A549 (cell line): ENCODE measurements at regions of chr2 and their contacts with region 1.

Region 1: DNA sequence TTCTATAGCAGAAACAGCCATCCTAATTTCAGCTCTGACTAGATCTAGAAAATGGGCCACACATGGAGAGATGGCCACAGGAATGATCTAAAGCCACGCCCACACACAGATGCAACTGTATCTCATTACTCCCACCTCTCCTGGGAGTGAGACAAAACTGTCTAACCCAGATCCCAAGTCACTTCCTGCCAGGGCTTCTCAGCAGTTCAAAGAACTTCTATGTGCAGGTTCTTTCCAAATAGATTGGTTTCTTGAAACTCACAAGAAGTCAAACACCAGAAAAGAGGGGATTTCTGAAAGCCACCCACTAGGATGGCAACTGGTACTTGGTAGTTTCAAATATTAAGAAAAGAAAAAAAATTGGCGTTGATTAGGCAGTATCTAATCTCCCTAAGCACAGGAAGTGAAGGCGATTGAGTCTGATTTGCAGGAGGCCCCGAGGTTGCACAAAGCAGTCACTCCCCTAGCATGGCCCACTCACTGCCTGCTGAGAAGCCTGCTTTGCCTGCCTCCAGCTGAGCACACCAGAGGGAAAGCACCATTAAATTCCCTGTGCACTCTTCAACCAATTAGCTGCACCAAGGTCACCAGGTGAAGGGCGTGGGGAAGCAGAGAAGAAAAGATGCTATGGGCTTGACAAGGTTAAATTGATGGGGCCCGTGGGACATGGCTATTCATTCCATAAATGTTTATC is 51.1 kb downstream of the PAPOLG start:
- DNase-seq: no peak
- ATAC-seq: no peak
- H3K4me3 ChIP-seq: no peak overlapping the region
- H3K27ac ChIP-seq: no peak overlapping the region
- H3K4me1 ChIP-seq: no peaks in the 10 kb centered on the region
- CTCF ChIP-seq: no peak
- EP300 ChIP-seq: no peak
- POLR2A ChIP-seq: no peak
- RAD21 ChIP-seq: no peak

Region 2: GRCh38 chr2:60818272-60818671 is 11.1 kb after region 1 on chr2:
- CTCF ChIA-PET with region 1: interaction called, 16 read pairs
- POLR2A ChIA-PET with region 1: interaction called, 4 read pairs
- DNase-seq: peak in 1 of 2 experiments; percentile 12
- ATAC-seq: peak in 1 of 2 experiments; percentile 29; a peak in 2 of 6 replicates
- H3K4me3 ChIP-seq: no peak overlapping the region
- H3K27ac ChIP-seq: no peak overlapping the region
- H3K4me1 ChIP-seq: 0 out of 3 replicates have a peak, but pooled peaks cover 4% of the 10 kb centered on the region
- CTCF ChIP-seq: peak; percentile 21; the same call in 1 of the 3 replicates
- EP300 ChIP-seq: no peak
- POLR2A ChIP-seq: no peak
- RAD21 ChIP-seq: peak in 1 of 2 experiments; percentile 29; a peak in 2 of 5 replicates